ENCODE measurements at regions of chr9 and their contacts with region 1.

Region 1: DNA sequence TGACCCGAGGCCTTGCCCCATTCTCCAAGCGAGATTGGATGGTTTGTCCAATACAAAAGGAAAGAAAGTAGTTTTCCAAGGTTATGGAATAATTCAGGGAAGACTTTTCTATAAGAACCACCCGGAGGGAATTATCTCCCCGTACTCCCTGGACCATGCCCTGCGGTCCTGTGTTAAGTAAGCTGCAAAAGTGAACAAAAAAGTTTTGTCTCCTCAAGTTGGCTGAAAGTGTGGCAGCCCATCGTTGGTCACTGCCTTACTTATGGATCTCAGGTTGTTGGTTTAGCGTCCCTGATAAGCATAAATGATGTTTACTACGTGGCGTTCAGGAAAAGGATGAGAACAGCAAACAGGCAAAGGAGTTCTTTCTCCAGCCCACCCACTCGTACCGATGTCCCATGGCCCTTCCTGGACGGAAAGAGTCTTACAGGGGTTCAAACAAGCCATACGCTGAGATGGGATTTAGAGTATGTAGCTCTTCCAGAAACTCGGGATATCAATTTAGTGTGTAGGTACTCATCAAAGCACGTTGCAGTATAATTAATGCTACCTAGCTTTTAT is 413 bp upstream of the AUH start:
- DNase-seq: no peak
- ATAC-seq: peak in 1 of 2 donors; percentile 16
- H3K4me3 Mint-ChIP-seq: peak overlapping the region; percentile 83 to 99 (median 94)
- H3K27ac Mint-ChIP-seq: peak overlapping the region; percentile 80 to 97 (median 93)
- H3K4me1 Mint-ChIP-seq: peaks cover 25 to 47% (median 44%) of the 10 kb centered on the region in 4 donors
- H3K27me3 Mint-ChIP-seq: no peaks in the 10 kb centered on the region

Region 2: DNA sequence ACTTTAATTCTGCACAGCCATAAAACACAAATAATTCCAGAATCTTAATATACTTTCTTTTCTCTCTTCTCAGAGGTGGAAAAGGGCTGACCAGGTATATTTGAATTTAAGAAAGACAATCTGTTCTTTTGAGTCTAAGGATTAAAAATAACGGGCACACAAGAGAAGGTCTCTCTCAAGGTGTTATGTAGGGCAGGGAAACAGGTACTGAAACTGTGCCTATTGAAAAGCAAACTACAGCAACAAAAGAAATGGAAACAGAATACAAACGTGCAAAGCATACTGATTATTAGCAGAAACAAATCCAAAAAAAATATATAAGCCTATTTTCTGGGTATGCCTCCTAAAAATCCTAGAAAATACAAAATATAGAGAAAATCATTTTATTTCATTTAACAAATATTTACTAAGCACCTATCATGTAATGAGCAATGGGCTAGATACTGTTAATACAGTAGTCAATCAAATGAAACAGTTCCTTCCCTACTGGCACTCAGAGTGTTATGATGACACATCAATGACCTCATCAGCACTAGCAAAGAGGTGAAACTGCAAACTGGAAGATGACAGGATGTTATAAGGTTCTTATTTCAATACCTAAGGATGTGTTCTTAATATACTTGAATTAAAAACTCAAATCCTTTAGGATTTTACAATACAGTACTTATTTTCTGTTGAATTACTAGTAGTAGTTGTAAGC is 88.1 kb before region 1 on chr9:
- POLR2A ChIA-PET with region 1: interaction called, 10 read pairs
- DNase-seq: no peak
- ATAC-seq: no peak
- H3K4me3 Mint-ChIP-seq: no peak overlapping the region
- H3K27ac Mint-ChIP-seq: no peak overlapping the region
- H3K4me1 Mint-ChIP-seq: peaks cover 0 to 5% (median under 1%) of the 10 kb centered on the region in 4 donors
- H3K27me3 Mint-ChIP-seq: no peaks in the 10 kb centered on the region